ENCODE measurements at regions of chr10 and their contacts with region 1.

Region 1: DNA sequence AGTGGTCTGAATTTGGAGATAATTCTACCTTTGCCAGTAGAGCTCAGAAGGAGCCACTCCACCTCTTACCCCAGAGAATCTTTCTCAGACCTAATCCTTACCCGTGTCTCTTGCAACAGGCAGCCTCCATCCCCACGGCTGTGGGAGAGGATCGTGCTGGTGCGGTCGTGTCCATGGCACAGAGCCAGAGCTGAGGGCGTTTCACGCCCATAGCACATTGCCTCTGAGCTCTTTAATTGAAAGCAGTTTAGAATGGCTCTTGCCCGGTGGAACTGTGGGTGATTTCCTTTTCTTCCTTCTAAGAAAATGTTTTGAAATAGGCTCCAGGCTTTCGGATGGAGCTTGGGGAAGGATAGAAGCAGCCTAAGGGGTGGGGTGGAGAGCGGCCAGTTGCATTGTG is 41.5 kb downstream of the PRF1 start:
- DNase-seq: no peak

Region 2: GRCh38 chr10:70403483-70404035 is 157.5 kb before region 1 on chr10:
- intact Hi-C with region 1: no loop called
- DNase-seq: no peak

Region 3: GRCh38 chr10:70461215-70461986 is 99.7 kb before region 1 on chr10:
- intact Hi-C with region 1: no loop called
- DNase-seq: no peak

Region 4: GRCh38 chr10:70500812-70501301 is 60.2 kb before region 1 on chr10:
- intact Hi-C with region 1: no loop called
- DNase-seq: no peak

Region 5: GRCh38 chr10:70672165-70673042 is 111.3 kb after region 1 on chr10 and contains the start of gene ADAMTS14:
- intact Hi-C with region 1: loop called (anchors 5 kb)
- DNase-seq: no peak
- total RNA-seq, gene ADAMTS14: 0.81 TPM

Region 6: DNA sequence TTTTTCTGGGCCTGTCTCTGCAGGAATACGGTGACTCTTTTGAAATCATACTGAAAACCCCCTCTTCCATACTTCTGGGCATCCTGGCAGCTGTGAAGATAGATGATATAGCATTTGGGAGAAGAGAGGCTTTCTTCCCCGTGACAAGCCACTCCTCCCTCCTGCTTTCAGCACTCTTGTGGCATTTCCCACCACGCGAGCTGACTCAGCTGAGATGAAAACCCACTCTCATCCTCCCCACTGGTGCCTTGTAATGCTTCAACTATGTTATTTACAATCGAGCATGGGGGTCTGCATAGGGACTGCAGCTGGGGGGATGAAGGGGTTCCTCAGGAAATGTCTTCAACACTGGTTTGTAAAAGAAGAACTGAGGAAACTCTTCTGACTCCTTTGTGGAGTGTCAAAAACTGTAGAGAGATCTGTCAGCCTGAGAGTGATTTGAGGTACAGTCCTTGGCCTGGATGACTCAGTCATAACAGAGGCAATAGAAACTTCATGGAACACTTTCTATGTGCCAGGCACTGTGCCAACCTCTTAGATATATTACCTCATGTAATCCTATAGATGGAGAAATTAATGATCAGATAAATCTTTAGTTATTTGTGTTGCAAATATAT is 225.8 kb after region 1 on chr10:
- intact Hi-C with region 1: no loop called
- DNase-seq: peak; percentile 67

Measured in cardiac septum (tissue), 1 donor.